HEK293 (cell line): ENCODE measurements at regions of chr17 and their contacts with region 1.

Region 1: DNA sequence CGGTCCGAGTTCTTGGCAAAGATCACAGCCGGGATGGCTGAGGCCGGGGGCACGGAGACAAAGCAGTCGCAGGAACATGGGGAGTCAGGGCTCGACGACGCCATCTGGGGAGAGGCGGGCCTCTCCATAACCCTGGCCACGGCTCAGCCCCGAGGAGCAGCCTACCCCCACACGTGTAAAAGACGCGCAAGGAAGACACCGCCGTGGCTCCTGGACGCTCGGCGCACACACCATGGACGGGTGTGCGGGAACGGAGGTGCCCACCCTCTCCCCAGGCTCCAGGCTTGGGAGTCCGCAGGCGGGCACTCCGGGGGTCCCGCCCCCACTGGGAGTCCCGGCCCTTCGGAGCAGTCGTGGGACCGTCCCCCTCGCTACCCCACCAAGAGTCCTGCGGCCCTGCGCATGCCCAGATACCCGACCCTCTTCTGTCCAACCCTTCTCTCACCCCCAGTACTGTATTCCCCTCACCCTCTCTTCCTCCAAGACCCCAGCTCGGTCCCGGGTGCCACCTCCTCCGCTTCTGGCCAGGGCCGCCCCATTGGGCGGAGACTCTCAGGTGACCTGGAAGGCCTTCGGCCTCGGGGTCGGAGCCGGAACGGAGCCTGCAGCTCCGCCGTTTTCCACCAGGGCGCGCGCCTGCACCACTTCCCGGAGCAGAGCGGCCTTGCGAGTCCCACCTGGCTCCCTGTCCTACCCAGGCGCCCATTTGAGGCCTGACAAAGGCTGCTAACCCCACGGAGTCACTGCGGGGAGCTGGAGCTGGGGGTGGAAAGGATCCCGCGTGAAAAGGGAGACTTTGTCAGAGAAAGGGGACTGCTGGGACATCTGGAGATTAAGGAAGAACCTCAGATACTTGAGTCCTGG is at the start of gene SCRN2:
- H3K4me3 ChIP-seq: peak within 1 kb of the TSS; percentile 82
- H3K27ac ChIP-seq: peak within 1 kb of the TSS; percentile 24; the same call in 1 of the 2 replicates
- H3K4me1 ChIP-seq: no peaks in the 10 kb centered on the region; the same call in 1 of the 2 replicates
- CTCF ChIP-seq: peak; percentile 97

Region 2: DNA sequence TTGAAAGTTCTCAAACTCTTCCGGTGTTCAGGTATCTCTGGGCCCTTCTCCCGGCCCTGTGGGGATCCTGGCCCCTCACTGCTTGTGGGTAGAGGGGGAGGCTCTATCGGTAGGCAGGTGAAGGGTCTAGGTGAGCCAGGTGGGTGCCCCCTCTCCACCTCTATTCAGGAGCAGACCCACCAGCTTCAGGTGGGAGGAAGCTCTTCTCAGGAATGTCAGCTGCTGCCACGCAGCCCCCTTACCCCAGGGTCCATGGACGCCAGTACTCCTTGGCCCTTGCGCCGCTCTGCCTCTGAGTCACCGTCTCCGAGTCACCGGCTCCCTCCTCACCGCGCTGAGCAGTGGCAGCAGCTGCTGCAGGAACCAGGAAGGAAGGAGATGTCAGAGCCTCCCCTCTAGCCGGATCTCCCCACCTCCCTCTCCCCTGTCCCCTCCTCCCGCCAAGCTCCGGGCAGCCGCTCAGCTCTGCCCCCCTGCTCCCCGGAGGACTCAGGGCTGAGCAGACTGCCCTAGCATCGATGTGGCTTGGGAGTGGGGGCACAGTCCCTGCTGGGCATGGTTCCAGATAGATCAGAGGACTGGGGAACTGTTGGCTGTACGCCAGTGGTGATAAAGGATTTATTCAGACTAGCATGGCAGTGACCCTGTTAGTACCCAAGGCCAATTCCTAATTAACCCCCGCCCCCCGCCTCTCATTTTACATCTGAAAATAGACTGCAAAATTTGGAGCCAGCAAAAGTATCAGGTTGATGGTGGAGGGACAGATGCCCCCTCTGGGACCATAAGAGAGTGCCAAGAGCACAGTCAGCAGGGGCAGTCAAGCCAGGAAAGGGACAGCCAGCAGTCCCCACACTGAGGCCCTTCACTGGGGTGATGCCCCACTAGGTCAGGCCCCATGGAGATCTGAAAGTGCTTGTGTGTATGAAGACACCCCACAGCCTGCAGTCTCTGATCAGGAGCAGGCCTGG is 19.3 kb before region 1 on chr17 and contains the start of gene OSBPL7:
- CTCF ChIA-PET with region 1: interaction called, 6 read pairs
- POLR2A ChIA-PET with region 1: interaction called, 10 read pairs
- H3K4me3 ChIP-seq: peak within 1 kb of the TSS; percentile 52
- H3K27ac ChIP-seq: peak within 1 kb of the TSS; percentile 48
- H3K4me1 ChIP-seq: peaks cover 3% of the 10 kb centered on the region
- CTCF ChIP-seq: peak; percentile 92

Region 3: DNA sequence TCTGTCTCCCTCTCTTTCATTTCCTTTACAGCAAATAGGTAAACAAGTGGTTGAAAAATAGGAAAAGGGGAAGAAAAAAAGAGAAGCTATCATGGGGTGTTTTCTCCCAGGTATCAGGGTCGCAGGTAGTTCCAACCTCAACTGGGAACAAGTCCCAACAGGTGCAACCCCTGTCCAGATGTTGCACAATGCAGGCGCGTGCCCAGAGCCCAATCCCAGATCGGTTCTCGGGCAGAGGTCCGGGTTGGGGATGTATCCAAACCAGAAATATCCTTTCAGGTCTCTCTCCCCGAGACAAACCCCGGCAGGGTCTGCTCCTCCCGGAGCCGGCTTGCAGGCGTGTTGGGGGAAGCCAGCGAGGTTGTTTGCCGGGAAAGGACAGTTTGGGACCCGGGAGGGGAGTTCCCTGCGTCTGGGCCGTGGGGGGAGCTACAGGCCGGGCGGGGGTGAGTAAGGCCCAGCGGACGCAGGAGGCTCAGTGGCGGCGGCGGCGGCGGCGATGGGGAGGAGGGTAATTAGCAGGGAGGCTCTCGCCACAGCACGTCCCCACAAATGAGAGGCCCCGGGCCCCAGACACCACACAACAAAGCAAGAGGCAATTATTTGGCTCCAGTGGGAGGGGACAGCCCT is 31.2 kb after region 1 on chr17:
- CTCF ChIA-PET with region 1: interaction called, 18 read pairs
- POLR2A ChIA-PET with region 1: no interaction called
- H3K4me3 ChIP-seq: no peak overlapping the region
- H3K27ac ChIP-seq: no peak overlapping the region
- H3K4me1 ChIP-seq: no peaks in the 10 kb centered on the region
- CTCF ChIP-seq: no peak

Region 4: GRCh38 chr17:47882247-47882646 is 41.3 kb after region 1 on chr17:
- CTCF ChIA-PET with region 1: interaction called, 837 read pairs
- POLR2A ChIA-PET with region 1: interaction called, 11 read pairs
- H3K4me3 ChIP-seq: no peak overlapping the region
- H3K27ac ChIP-seq: no peak overlapping the region
- H3K4me1 ChIP-seq: peaks cover 6% of the 10 kb centered on the region
- CTCF ChIP-seq: no peak

Region 5: DNA sequence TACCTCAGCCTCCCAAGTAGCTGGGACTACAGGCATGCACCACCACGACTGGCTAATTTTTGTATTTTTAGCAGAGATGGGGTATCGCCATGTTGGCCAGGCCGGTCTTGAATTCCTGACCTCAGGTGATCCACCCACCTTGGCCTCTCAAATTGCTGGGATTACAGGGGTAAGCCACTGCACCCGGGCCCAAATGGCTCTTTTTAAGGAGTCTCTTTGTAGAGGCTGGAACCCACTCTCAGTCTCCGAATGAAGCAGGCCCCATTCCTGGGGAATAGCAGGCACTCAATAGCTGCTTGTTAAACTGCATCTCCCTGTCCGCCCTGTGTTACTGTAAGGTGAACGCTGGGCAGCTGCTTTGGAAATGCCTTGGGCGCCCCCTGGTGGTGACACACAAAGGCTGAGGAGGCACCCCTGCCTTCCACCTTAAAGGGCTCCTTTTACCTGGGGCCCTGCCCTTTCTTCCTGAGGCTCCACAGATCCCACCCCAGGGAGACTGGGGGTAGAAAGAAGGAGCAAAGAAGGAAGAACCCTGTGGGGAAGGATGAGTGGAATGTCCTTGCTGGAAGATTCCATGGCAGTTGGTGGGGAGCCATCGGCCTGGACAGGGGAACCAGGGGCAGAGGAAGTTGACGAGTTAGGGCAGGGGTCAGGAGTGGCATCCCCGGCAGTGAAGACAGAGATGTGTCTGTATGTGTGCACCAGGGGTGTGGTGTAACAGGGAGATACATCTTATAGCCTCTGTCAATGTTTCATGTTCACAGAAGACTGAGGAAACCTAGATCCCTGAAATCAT is 49.0 kb after region 1 on chr17:
- CTCF ChIA-PET with region 1: interaction called, 837 read pairs
- POLR2A ChIA-PET with region 1: interaction called, 35 read pairs
- H3K4me3 ChIP-seq: no peak overlapping the region
- H3K27ac ChIP-seq: no peak overlapping the region
- H3K4me1 ChIP-seq: peaks cover 2% of the 10 kb centered on the region; the same call in 1 of the 2 replicates
- CTCF ChIP-seq: peak; percentile 94

Region 6: DNA sequence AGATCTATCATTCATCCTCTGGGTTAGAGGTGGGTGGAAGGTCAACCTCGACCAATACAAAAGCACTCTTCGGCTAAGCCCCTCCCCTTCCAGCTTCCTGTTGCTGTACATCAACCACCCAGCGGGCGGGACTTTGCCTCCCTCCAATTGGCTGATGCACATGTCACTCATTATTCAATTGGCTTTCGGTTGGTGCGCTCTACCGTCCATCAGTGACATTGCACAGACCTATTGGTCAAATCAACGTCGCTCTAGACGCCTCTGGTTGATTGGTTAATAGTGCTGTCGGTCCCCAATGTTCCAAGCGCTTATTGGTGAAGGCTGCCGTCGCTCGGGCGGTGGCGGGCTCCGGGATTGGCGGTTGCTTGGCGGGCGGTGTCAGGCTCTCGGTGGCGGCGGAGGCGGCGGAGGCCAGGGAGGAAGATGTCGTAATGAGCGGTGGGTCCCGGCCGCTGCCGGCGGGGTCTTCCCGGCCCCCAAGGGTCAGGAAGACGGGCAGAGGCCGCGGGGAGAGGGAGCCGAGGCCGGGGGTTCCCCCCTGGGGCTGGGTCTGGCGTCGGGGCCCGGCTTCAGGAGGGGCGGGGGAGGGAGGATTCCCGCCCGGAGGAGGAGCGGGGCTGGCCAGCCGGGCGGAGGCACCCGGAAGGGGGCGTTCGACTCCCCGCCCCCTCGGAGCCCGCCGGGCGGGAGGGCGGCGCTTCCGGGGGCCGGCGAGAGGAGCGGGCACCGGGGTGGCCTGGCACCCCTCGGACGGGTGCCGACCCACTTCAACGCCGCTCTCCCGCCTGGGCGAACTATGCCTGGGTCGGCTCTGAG is 55.1 kb after region 1 on chr17 and contains the start of gene SP2:
- CTCF ChIA-PET with region 1: interaction called, 837 read pairs
- POLR2A ChIA-PET with region 1: interaction called, 35 read pairs
- H3K4me3 ChIP-seq: peak within 1 kb of the TSS; percentile 95
- H3K27ac ChIP-seq: peak within 1 kb of the TSS; percentile 98
- H3K4me1 ChIP-seq: peaks cover 4% of the 10 kb centered on the region; the same call in 1 of the 2 replicates
- CTCF ChIP-seq: no peak; the same call in 1 of the 2 replicates

Region 7: GRCh38 chr17:47970704-47971463 is 129.9 kb after region 1 on chr17 and contains the start of gene CDK5RAP3:
- CTCF ChIA-PET with region 1: interaction called, 18 read pairs
- POLR2A ChIA-PET with region 1: interaction called, 5 read pairs
- H3K4me3 ChIP-seq: peak within 1 kb of the TSS; percentile 87
- H3K27ac ChIP-seq: peak within 1 kb of the TSS; percentile 69; the same call in 1 of the 2 replicates
- H3K4me1 ChIP-seq: peaks cover 7% of the 10 kb centered on the region; the same call in 1 of the 2 replicates
- CTCF ChIP-seq: peak; percentile 99